ENCODE measurements at regions of chr9 and their contacts with region 1.

Region 1: DNA sequence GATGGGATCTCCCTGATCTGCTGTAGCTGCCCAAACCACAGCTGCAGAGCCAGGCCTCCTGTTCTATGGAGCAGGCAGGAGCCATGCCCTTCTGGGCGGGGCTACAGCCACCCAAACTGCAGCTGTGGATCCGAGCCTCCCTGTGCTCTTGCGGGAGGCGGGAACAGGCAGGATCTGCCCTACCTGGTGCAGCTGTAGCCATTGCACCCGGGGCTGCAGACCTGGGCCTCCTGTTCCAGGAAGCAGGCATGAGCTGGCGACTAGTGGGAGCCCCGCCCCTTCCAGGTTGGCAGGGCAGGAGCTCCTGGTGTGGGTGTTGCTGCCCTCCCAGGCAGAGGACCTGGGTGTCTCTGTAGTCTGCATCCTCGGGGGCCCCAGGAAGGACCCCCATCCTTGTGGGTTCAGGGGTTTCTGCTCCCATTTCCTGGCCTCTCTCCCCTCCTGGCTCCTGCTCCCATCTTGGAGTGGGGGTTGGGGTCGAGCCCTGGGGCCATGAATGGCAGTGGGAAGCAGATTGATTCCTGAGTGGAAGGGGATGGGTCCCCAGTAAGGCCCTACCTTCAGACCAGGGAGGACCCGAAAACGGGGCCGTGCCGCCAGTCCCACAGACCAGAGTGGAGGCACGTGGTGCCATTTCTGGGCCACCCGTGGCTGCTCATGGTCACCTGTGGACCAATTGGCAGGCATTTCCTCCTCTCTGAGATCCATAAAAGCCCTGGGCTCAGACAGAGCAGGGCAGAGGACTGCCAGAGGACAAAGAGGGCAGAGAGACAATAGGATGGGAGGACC is 22.9 kb upstream of the UNC13B start:
- DNase-seq: no peak

Region 2: DNA sequence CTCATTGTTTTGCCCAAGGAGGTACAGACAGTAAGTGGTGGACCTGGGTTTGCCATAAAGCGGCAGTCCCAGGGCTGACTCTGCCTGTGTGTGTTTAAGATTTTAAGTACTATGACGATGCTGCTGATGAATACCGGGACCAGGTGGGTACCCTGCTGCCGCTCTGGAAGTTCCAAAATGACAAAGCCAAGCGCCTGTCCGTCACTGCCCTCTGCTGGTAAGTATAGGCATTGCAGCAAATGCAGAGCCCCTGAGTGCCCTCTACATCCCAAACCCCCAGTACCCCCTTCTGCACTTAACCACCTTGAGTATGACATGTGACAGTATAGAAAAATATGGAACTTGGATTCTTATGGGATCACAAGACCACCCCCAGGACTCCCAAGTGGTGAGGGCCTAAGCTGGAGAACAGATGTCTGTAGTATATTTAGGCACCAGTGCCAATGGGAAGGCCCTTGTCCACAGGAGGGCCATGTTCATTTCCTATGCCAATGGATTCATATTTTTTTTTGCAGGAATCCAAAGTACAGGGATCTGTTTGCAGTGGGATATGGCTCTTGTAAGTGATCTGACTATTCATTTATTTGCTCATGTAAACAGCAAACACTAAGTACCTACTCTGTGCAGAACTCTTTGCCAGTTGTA is 638.1 kb before region 1 on chr9:
- intact Hi-C with region 1: loop called in 1 of 2 experiments (anchors 5 kb)
- DNase-seq: no peak

Region 3: GRCh38 chr9:35102926-35103659 is 35.8 kb before region 1 on chr9 and contains the start of gene STOML2:
- intact Hi-C with region 1: loop called in 1 of 2 experiments (anchors 1 kb)
- DNase-seq: peak; percentile 98
- total RNA-seq, gene STOML2: 67.9 to 71.6 TPM

Region 4: GRCh38 chr9:35161713-35162604 is 23.1 kb after region 1 on chr9 and contains the start of gene UNC13B:
- intact Hi-C with region 1: no loop called
- DNase-seq: peak; percentile 97
- total RNA-seq, gene UNC13B: 27.3 to 29.1 TPM

Measured in posterior vena cava (tissue), 2 donors.